ENCODE measurements at regions of chr10 and their contacts with region 1.

Region 1: GRCh38 chr10:102420810-102421644 is at the start of gene FBXL15:
- DNase-seq: peak; percentile 98
- H3K4me3 Mint-ChIP-seq: peak within 1 kb of the TSS; percentile 95
- H3K27ac Mint-ChIP-seq: peak within 1 kb of the TSS; percentile 91
- H3K4me1 Mint-ChIP-seq: peaks cover 30% of the 10 kb centered on the region
- H3K27me3 Mint-ChIP-seq: peaks cover 20% of the 10 kb centered on the region
- total RNA-seq, gene FBXL15: 9.9 to 10.8 TPM

Region 2: DNA sequence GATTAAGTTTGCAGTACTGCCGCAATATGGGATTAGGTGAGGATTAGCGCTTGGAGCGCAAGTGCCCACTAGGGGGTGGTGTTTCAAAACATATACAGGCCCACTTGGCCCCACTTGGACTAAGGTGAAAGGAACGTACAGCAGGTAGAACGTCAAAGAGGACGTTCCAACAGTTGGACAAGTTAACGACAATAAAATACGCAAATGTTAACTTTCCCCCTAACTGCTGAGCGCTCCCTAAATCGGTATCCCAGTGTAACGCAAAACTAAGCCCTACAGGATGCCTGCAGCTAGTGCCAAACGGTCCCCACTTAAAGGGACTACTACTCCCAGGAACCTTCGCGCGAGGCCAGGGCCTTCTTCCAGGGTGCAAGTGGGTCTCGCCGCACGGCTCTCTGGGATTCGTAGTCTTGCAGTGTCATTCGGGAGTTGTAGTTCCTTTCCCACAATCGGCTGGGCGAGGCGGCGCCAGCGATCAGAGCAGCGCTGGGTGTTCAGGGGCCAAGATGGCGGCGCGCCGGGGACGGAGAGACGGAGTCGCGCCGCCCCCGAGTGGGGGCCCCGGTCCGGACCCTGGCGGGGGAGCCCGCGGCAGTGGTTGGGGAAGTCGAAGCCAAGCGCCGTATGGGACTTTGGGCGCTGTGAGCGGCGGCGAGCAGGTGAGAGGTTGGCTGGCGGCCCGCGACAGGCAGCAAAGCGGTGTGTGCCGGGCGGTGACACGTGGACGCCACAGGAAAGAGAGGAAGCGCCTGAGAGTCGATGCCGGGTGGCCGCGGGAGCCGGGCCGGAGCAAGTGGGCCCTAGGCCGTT is 288.3 kb before region 1 on chr10 and contains the start of gene PPRC1:
- CTCF ChIA-PET with region 1: no interaction called
- intact Hi-C with region 1: loop called (anchors 1 kb)
- DNase-seq: peak; percentile 99
- H3K4me3 Mint-ChIP-seq: peak within 1 kb of the TSS; percentile 97
- H3K27ac Mint-ChIP-seq: peak within 1 kb of the TSS; percentile 96
- H3K4me1 Mint-ChIP-seq: peaks cover 42% of the 10 kb centered on the region
- H3K27me3 Mint-ChIP-seq: no peaks in the 10 kb centered on the region
- total RNA-seq, gene PPRC1: 54.6 to 55.0 TPM

Region 3: GRCh38 chr10:102241444-102242117 is 179.4 kb before region 1 on chr10 and contains the start of gene PITX3:
- CTCF ChIA-PET with region 1: no interaction called
- intact Hi-C with region 1: no loop called
- DNase-seq: peak; percentile 91
- H3K4me3 Mint-ChIP-seq: peak within 1 kb of the TSS; percentile 86
- H3K27ac Mint-ChIP-seq: no peak within 1 kb of the TSS
- H3K4me1 Mint-ChIP-seq: peaks cover 20% of the 10 kb centered on the region
- H3K27me3 Mint-ChIP-seq: peaks cover 26% of the 10 kb centered on the region
- total RNA-seq, gene PITX3: 0.14 TPM in 1 of 2 experiments, not detected in the other

Region 4: GRCh38 chr10:102399217-102400089 is 21.6 kb before region 1 on chr10:
- CTCF ChIA-PET with region 1: interaction called, 46 read pairs
- intact Hi-C with region 1: loop called (anchors 1 kb)
- DNase-seq: peak; percentile 89
- H3K4me3 Mint-ChIP-seq: peak overlapping the region; percentile 87
- H3K27ac Mint-ChIP-seq: peak overlapping the region; percentile 99
- H3K4me1 Mint-ChIP-seq: peaks cover 49% of the 10 kb centered on the region
- H3K27me3 Mint-ChIP-seq: no peaks in the 10 kb centered on the region

Region 5: GRCh38 chr10:102432162-102432950 is 11.3 kb after region 1 on chr10 and contains the start of gene CUEDC2:
- CTCF ChIA-PET with region 1: interaction called, 17 read pairs
- intact Hi-C with region 1: loop called (anchors 1 kb)
- DNase-seq: peak; percentile 99
- H3K4me3 Mint-ChIP-seq: peak within 1 kb of the TSS; percentile 90
- H3K27ac Mint-ChIP-seq: peak within 1 kb of the TSS; percentile 92
- H3K4me1 Mint-ChIP-seq: peaks cover 47% of the 10 kb centered on the region
- H3K27me3 Mint-ChIP-seq: no peaks in the 10 kb centered on the region
- total RNA-seq, gene CUEDC2: 63.3 to 64.4 TPM

Region 6: DNA sequence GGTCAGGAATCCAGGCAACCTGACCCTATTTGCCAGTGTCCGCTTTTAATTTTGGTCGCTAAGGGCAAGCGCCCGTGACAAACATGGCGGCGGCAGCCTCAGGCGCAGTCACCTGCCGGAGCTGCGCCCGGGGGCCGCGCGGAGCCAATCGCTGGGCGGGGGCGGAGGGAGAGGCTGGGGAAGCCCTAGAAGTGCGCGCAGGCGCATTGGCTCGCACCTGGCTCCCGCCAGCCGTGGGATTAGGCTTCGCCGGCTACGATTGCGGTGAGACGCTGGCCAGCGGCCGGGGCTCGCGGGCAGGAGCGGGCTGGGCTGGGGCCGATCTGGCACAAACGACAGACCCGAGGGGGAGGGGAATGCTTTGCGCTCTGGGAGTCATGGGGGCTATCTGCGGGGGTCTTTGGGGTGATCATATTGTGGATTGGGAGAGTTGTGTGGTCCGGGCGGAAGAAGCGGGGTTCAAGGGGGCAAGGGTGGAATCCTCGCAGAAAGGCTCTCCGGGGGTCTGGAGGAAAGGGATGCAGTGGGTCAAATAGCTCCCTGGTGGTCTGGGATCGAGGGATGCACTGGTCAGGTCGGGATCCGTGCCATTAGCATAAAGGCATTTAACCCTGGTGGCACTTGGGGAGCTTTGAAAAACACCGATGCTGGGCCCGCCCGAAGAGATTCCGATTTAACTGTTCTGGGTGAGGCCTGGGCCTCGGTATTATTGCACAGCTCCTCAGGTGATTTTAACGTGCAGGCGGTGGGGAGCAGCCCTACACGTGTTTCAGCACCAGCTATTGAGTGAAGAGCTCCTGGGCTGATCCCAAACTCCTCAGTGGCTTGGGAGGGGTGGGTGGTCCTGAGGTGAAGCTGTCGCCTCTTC is 40.4 kb after region 1 on chr10:
- CTCF ChIA-PET with region 1: interaction called, 4 read pairs
- intact Hi-C with region 1: loop called (anchors 1 kb)
- DNase-seq: peak; percentile 94
- H3K4me3 Mint-ChIP-seq: peak overlapping the region; percentile 88
- H3K27ac Mint-ChIP-seq: peak overlapping the region; percentile 73
- H3K4me1 Mint-ChIP-seq: peaks cover 23% of the 10 kb centered on the region
- H3K27me3 Mint-ChIP-seq: no peaks in the 10 kb centered on the region

Measured in activated naive CD4-positive, alpha-beta T cell treated with anti-CD3 and anti-CD28 coated beads for 36 hours (primary cell).